ENCODE measurements at regions of chr15 and their contacts with region 1.

Region 1: DNA sequence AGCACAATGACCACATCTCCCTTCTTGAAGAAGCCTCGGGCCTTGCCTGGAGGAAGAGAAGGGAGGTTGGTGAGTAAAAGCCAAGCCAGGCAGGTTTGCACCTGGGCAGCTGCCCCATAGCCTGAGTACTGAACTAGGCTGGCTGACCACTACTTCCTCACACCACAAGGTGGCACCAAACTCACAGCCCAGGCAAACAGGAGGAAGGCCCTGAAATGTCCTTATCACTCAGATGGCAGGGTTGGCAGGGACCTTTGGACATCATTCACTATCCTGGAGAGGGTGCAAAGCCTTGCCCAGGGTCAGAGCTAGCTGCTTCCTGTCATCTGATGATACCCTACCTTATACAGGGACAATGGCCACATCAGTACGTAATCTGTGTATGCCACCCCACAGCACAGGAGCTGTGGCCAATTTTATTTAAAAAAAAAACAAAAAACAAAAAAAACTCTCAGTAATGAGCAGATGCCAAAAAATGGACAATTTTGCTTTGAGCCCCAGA is 2.2 kb upstream of the GRAMD2A start:
- DNase-seq: peak; percentile 55 to 84 (median 77)
- ATAC-seq: peak; percentile 91
- H3K4me3 ChIP-seq: no peak overlapping the region
- H3K4me3 Mint-ChIP-seq: no peak overlapping the region
- H3K27ac ChIP-seq: no peak overlapping the region
- H3K27ac Mint-ChIP-seq: no peak overlapping the region
- H3K4me1 ChIP-seq: peaks cover 5% of the 10 kb centered on the region
- H3K4me1 Mint-ChIP-seq: peaks cover 9% of the 10 kb centered on the region
- H3K27me3 ChIP-seq: peaks cover 0 to 4% of the 10 kb centered on the region in 2 experiments
- H3K27me3 Mint-ChIP-seq: peaks cover 13% of the 10 kb centered on the region
- CTCF ChIP-seq: peak; percentile 83

Region 2: GRCh38 chr15:72237286-72238224 is 37.8 kb after region 1 on chr15:
- CTCF ChIA-PET with region 1: interaction called, 10 read pairs
- POLR2A ChIA-PET with region 1: no interaction called
- intact Hi-C with region 1: no loop called
- DNase-seq: peak in 6 of 9 experiments; percentile 12 to 59 (median 38)
- ATAC-seq: peak; percentile 49
- H3K4me3 ChIP-seq: no peak overlapping the region
- H3K4me3 Mint-ChIP-seq: no peak overlapping the region
- H3K27ac ChIP-seq: peak overlapping the region in 1 of 2 experiments; percentile 44
- H3K27ac Mint-ChIP-seq: peak overlapping the region; percentile 18
- H3K4me1 ChIP-seq: peaks cover 11% of the 10 kb centered on the region
- H3K4me1 Mint-ChIP-seq: peaks cover 18% of the 10 kb centered on the region
- H3K27me3 ChIP-seq: no peaks in the 10 kb centered on the region
- H3K27me3 Mint-ChIP-seq: no peaks in the 10 kb centered on the region
- CTCF ChIP-seq: no peak

Region 3: GRCh38 chr15:72285927-72286516 is 86.3 kb after region 1 on chr15:
- CTCF ChIA-PET with region 1: interaction called, 109 read pairs
- POLR2A ChIA-PET with region 1: no interaction called
- intact Hi-C with region 1: loop called (anchors 1 kb)
- DNase-seq: peak in 8 of 9 experiments; percentile 17 to 69 (median 58)
- ATAC-seq: peak; percentile 65
- H3K4me3 ChIP-seq: no peak overlapping the region
- H3K4me3 Mint-ChIP-seq: no peak overlapping the region
- H3K27ac ChIP-seq: no peak overlapping the region
- H3K27ac Mint-ChIP-seq: no peak overlapping the region
- H3K4me1 ChIP-seq: no peaks in the 10 kb centered on the region
- H3K4me1 Mint-ChIP-seq: no peaks in the 10 kb centered on the region
- H3K27me3 ChIP-seq: no peaks in the 10 kb centered on the region
- H3K27me3 Mint-ChIP-seq: no peaks in the 10 kb centered on the region
- CTCF ChIP-seq: peak; percentile 54